Astrocyte of the cerebellum (primary cell): ENCODE measurements at regions of chr7 and their contacts with region 1.

Region 1: GRCh38 chr7:132950725-132951124 is 131.2 kb downstream of the CHCHD3 start:
- DNase-seq: no peak
- H3K4me3 ChIP-seq: no peak overlapping the region
- CTCF ChIP-seq: no peak

Region 2: GRCh38 chr7:132895231-132895630 is 55.5 kb before region 1 on chr7:
- in situ Hi-C with region 1: no loop called
- DNase-seq: no peak
- H3K4me3 ChIP-seq: no peak overlapping the region
- CTCF ChIP-seq: no peak

Region 3: GRCh38 chr7:133051066-133051465 is 100.3 kb after region 1 on chr7:
- in situ Hi-C with region 1: loop called (anchors 5 kb)
- DNase-seq: no peak
- H3K4me3 ChIP-seq: no peak overlapping the region
- CTCF ChIP-seq: peak; percentile 45